ENCODE measurements at regions of chr22 and their contacts with region 1.

Region 1: GRCh38 chr22:37643225-37643847 is 3.9 kb downstream of the SH3BP1 start:
- DNase-seq: no peak
- ATAC-seq: peak; percentile 92
- H3K4me3 ChIP-seq: no peak overlapping the region
- H3K27ac ChIP-seq: no peak overlapping the region
- H3K4me1 ChIP-seq: peaks cover 6% of the 10 kb centered on the region; the same call in 1 of the 2 replicates
- H3K27me3 ChIP-seq: no peaks in the 10 kb centered on the region
- CTCF ChIP-seq: peak; percentile 88

Region 2: DNA sequence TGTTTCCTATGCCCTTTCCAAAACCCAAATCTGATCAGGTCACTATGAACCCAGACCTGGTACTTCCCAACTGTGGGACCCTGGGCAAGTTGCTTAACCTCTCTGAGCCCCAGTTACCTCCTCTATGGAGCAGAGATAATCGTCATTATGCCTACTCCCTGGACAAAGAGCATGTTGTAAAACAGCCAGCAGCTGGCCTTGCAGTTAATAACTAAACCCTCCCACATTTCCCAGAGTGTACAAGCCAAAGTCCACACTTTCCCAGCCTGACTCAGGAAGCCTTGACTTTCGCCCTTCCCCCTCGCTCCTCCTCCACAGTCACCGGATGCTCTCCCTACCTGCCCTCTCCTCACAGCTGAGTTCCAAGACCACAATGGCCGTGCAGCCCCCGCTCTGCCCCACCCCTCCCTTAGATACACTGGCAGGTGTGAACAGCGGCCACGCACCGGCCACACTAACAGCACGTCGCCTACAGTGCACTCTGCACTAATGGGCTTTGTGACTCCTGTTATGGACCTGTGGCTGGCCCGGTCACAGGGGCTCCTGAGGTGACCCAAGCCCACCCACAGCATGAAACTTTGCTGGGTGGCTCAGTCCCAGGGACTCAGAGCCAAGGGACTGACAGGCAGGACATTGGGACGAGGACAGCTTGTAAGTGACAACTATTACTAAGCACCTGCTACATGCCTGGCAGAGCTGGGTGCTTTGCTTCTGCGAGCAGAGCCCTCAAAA is 141.6 kb before region 1 on chr22:
- CTCF ChIA-PET with region 1: no interaction called
- POLR2A ChIA-PET with region 1: no interaction called
- in situ Hi-C with region 1: no loop called
- intact Hi-C with region 1: no loop called
- DNase-seq: no peak
- ATAC-seq: peak; percentile 53
- H3K4me3 ChIP-seq: no peak overlapping the region
- H3K27ac ChIP-seq: peak overlapping the region; percentile 77
- H3K4me1 ChIP-seq: peaks cover 67% of the 10 kb centered on the region
- H3K27me3 ChIP-seq: no peaks in the 10 kb centered on the region
- CTCF ChIP-seq: no peak

Region 3: DNA sequence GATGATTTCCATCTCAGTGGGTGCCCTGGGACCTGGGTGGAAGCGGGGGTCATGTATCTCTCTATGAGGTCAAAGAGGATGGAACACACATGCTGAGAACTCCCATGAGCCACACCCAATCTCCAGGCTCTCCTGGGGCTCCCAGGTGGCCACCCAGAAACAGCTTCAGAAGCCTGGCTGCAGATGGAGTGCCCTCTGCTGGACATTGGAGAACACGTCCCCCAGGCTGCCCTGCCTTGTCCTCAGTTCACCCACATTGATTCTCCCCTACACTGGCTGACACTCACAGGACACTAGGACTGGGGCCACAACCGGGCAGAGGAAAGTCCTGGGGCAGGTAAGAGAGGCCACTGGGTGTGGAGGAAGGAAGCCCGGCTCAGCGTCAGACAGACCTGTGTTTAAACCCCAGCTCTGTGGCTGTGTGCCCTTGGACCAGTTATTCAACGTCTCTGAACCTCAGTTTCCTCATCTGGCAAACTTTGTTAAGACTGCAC is 38.3 kb after region 1 on chr22:
- CTCF ChIA-PET with region 1: interaction called, 13 read pairs
- POLR2A ChIA-PET with region 1: interaction called, 4 read pairs
- in situ Hi-C with region 1: no loop called
- intact Hi-C with region 1: loop called (anchors 2 kb)
- DNase-seq: peak; percentile 58
- ATAC-seq: peak; percentile 71
- H3K4me3 ChIP-seq: no peak overlapping the region
- H3K27ac ChIP-seq: peak overlapping the region; percentile 59
- H3K4me1 ChIP-seq: peaks cover 32% of the 10 kb centered on the region
- H3K27me3 ChIP-seq: no peaks in the 10 kb centered on the region
- CTCF ChIP-seq: peak; percentile 91

Region 4: GRCh38 chr22:37823134-37823985 is 180.0 kb after region 1 on chr22 and contains the start of gene GALR3:
- CTCF ChIA-PET with region 1: interaction called, 12 read pairs
- POLR2A ChIA-PET with region 1: no interaction called
- in situ Hi-C with region 1: no loop called
- intact Hi-C with region 1: no loop called
- DNase-seq: no peak
- ATAC-seq: no peak
- H3K4me3 ChIP-seq: no peak within 1 kb of the TSS
- H3K27ac ChIP-seq: no peak within 1 kb of the TSS
- H3K4me1 ChIP-seq: no peaks in the 10 kb centered on the region
- H3K27me3 ChIP-seq: no peaks in the 10 kb centered on the region
- CTCF ChIP-seq: no peak
- total RNA-seq, gene GALR3: not detected

Measured in Panc1 (cell line).